PC-3 (cell line): ENCODE measurements at regions of chr1 and their contacts with region 1.

Region 1: GRCh38 chr1:46724991-46725735 is 6.2 kb upstream of the EFCAB14 start:
- DNase-seq: peak; percentile 86
- ATAC-seq: peak; percentile 99
- H3K4me3 ChIP-seq: no peak overlapping the region
- H3K27ac ChIP-seq: no peak overlapping the region
- H3K4me1 ChIP-seq: peaks cover 8% of the 10 kb centered on the region; the same call in 1 of the 2 replicates
- H3K27me3 ChIP-seq: no peaks in the 10 kb centered on the region; the same call in 1 of the 2 replicates
- CTCF ChIP-seq: peak; percentile 93

Region 2: DNA sequence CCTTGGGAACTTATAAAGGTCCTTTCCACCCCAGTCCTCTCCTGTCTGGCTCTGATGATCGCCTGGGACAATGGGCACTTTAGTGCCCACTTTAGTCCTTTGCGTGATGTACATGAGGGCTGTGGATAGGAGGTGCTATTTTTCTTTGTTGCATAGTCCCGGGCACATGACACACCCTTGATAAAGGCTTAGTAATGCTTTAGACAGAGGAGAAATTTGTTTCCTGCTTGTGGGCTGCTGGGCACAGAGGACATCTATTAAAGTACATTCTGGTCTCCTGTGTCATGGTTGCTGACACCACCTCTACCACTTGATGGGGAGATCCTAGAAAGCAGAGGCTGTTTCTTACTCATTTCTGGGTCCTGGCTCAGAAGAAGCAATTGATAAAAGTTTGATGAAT is 168.3 kb before region 1 on chr1:
- CTCF ChIA-PET with region 1: no interaction called
- POLR2A ChIA-PET with region 1: no interaction called
- intact Hi-C with region 1: loop called (anchors 2 kb)
- DNase-seq: peak; percentile 69
- ATAC-seq: peak; percentile 94
- H3K4me3 ChIP-seq: no peak overlapping the region
- H3K27ac ChIP-seq: no peak overlapping the region
- H3K4me1 ChIP-seq: peaks cover 11% of the 10 kb centered on the region
- H3K27me3 ChIP-seq: no peaks in the 10 kb centered on the region
- CTCF ChIP-seq: peak; percentile 48

Region 3: DNA sequence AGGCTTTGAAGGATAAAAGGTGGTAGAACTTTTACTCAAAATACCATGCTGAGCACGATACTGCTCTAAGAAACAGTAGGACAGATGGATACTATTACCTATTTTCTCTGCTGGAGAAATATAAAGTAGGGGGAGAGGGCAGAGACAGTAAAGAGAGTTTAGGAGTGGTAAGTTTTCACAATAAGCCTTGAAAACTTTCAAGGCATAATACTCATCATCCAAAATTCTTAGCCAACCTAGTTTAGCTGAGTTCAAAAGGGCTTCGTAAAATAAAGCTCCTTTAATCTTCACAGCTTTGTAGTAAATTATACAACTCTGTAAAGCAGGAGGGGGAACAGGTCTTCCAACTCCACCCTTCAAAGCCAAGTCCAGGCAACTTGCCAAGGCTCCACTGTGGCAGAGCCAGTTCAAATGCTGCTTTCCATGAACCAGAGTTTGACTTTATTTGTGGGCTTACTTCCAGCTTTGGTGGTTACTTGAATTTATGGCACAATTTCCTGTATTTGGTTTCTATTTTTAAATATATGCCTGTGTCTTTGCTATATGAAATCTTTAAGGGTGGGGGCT is 38.0 kb before region 1 on chr1:
- CTCF ChIA-PET with region 1: no interaction called
- POLR2A ChIA-PET with region 1: no interaction called
- intact Hi-C with region 1: loop called (anchors 5 kb)
- DNase-seq: peak; percentile 85
- ATAC-seq: peak; percentile 59
- H3K4me3 ChIP-seq: no peak overlapping the region
- H3K27ac ChIP-seq: no peak overlapping the region
- H3K4me1 ChIP-seq: peaks cover 27% of the 10 kb centered on the region
- H3K27me3 ChIP-seq: no peaks in the 10 kb centered on the region
- CTCF ChIP-seq: no peak

Region 4: DNA sequence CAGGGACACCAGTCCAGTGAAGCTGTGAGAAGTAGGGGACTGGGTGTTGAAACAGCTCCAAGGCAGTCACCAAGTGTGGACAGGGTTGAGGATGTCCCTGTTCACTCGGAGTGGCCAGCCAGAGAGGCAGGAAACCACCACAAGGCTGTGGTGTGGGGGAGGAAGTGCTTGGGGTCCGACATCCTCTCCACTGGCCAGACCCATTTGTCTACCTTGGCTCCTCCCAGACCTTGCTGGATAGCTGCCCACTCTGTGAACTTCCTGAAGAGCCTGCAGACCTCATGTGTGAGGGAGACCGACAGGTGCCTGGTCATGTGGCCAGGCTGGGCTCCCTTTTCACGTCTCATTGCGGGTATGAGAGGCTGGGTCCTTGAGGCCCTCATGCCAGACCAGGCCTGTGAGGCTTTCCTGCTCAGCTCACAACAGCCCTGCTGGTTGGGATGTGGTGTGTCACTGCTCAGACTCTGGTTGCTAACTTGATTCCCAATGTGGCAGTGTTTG is 95.4 kb after region 1 on chr1:
- CTCF ChIA-PET with region 1: no interaction called
- POLR2A ChIA-PET with region 1: no interaction called
- intact Hi-C with region 1: no loop called
- DNase-seq: no peak
- ATAC-seq: no peak
- H3K4me3 ChIP-seq: no peak overlapping the region
- H3K27ac ChIP-seq: no peak overlapping the region
- H3K4me1 ChIP-seq: no peaks in the 10 kb centered on the region
- H3K27me3 ChIP-seq: no peaks in the 10 kb centered on the region; the same call in 1 of the 2 replicates
- CTCF ChIP-seq: no peak